Endothelial cell of umbilical vein (primary cell): ENCODE measurements at regions of chr2 and their contacts with region 1.

Region 1: DNA sequence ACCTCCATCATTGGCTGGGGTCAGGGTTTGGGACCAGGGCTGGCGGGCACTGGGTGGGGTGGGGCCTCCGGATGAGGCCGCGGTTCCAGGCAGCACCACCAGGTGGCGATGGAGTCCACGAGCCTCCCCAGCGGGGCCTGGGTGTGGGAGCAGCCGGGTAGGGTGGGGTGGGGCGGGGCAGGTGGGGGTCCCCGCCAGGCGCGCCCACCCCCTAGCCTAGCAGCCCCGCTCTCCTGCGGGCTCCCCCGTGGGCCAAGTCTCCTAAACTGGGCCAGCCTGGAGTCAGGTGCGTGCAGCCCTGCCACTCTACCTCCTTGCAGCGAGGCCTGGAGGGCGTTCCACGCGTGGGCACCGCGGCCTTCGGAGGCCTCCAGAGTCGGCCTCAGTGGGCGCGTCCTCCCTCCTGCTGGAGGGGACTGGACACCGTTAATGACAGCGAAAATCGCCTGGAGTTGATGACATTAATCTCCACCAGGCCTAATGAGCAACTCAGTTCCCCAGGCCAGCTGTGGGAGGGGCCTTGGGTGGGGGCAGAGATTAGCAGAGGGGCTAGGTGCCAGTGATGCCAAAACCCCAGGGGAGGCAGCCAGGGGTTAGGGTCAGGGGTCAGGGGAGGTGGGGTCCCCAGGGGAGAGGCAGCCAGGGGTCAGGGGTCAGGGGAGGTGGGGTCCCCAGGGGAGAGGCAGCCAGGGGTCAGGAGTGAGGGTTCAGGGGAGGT is 187.6 kb downstream of the TWIST2 start:
- DNase-seq: no peak
- H3K4me3 ChIP-seq: no peak overlapping the region
- H3K27ac ChIP-seq: no peak overlapping the region
- H3K4me1 ChIP-seq: no peaks in the 10 kb centered on the region
- H3K27me3 ChIP-seq: peaks cover 0 to 3% of the 10 kb centered on the region in 2 experiments
- CTCF ChIP-seq: peak; percentile 38 to 92
- POLR2A ChIP-seq: no peak

Region 2: DNA sequence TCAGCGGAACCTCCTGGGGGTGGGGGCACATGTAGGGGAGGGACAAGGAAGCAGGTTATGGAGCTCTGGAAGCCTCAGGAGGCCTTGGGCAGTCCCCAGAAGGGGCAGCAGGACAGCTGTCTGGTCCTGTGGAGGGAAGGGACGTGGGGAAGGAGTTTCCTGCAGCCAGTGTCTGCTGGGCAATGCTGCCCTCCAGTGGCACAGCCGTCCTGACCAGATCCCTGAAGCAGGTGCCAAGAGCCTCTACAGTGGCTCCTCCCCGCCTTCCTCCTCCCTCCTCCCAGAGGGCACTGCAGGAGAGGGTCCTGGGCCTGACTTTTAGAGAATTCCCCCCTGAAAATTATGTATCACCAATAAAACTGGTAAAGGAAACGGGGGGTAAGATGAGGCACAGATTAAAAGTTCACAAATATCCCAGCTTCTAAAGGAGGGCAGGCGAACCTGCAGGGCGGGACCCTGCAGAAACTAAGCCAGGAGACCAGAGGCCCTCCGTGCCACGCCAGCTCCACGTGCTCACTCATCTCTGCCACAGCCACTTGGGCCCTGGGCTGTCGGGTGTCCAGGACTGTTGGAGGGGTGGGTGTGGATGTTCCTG is 70.9 kb after region 1 on chr2:
- CTCF ChIA-PET with region 1: interaction called, 9 read pairs
- POLR2A ChIA-PET with region 1: no interaction called
- dilution Hi-C with region 1: no loop called
- intact Hi-C with region 1: loop called (anchors 1 kb)
- DNase-seq: peak; percentile 59
- H3K4me3 ChIP-seq: no peak overlapping the region
- H3K27ac ChIP-seq: no peak overlapping the region
- H3K4me1 ChIP-seq: no peaks in the 10 kb centered on the region
- H3K27me3 ChIP-seq: no peaks in the 10 kb centered on the region
- CTCF ChIP-seq: peak; percentile 42 to 80
- POLR2A ChIP-seq: no peak

Region 3: DNA sequence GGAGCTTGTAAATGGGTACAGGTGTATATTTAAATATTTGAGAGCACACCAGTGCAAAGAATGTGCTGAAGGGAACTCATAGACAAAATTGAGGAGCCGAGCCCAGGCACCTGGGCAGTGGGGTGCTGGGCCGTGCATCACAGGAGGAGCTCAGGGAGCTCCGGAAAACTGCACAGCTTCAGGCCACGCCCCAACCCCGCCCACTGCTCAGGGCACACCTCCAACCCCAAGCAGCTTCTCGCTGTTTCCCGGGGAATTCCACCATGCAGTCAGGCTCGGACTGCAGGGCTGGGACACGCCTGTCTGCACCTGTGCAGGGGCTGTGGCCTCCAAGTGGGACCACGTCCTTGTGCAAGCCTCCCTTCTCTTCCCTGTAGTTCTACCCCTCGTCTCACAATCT is 122.3 kb after region 1 on chr2:
- CTCF ChIA-PET with region 1: no interaction called
- POLR2A ChIA-PET with region 1: no interaction called
- dilution Hi-C with region 1: no loop called
- intact Hi-C with region 1: no loop called
- DNase-seq: peak; percentile 24
- H3K4me3 ChIP-seq: no peak overlapping the region
- H3K27ac ChIP-seq: no peak overlapping the region
- H3K4me1 ChIP-seq: no peaks in the 10 kb centered on the region
- H3K27me3 ChIP-seq: no peaks in the 10 kb centered on the region
- CTCF ChIP-seq: no peak
- POLR2A ChIP-seq: no peak